Activated B cell treated with CpG ODN at 0.5 μM for 24 hours (primary cell): ENCODE measurements at regions of chr7 and their contacts with region 1.

Region 1: GRCh38 chr7:90595801-90596671 is at the start of gene CDK14:
- DNase-seq: peak; percentile 79
- ATAC-seq: peak; percentile 66
- H3K4me3 Mint-ChIP-seq: peak within 1 kb of the TSS; percentile 96
- H3K27ac Mint-ChIP-seq: peak within 1 kb of the TSS; percentile 95
- H3K4me1 Mint-ChIP-seq: peaks cover 56% of the 10 kb centered on the region
- H3K27me3 Mint-ChIP-seq: no peaks in the 10 kb centered on the region
- CTCF ChIP-seq: no peak
- total RNA-seq, gene CDK14: 130 and 140 TPM in 2 replicates

Region 2: DNA sequence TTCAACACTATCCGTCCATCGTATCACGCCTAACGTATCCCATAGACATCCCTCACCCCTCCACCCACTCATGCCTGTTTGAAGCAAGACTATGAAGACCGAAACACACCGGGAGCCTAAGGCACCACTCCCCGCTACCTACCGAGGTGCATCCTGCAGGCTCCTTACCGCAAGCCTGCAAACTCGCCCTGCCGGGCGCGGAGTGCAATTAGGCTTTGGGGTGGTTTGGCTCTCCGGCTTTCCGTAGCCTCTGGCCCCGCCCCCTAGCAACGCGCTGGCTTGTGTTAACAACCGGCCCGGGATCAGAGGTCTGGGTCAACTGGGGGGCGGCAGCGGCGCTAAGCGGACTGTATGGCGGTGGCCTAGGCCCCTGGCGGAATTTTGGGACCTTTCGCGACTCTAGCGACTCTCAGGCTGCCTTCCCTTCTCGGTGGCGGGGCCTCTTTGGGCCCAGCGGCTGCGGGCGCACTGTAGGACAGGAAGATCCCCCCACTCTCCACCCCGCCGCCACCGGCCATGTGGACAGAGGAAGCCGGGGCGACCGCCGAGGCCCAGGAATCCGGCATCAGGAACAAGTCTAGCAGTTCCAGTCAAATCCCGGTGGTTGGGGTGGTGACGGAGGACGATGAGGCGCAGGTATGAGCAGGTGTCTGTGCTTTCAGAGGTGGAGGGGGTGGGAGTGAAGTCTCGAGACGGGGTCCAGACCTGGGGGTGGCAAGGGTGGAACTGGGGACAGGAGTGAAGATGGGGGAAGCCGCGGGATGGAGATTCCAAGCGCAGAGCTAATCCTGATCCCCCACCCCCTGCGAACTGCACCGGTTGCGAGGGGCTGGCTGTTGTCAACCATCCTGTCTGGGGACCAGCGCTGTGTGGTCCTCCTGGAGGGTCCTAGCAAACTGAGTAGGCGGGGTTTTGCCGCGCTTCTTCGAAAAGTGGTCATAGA is 350.9 kb before region 1 on chr7 and contains the start of gene CFAP69:
- CTCF ChIA-PET with region 1: no interaction called
- POLR2A ChIA-PET with region 1: no interaction called
- intact Hi-C with region 1: loop called (anchors 10 kb)
- DNase-seq: peak; percentile 82
- ATAC-seq: peak; percentile 89
- H3K4me3 Mint-ChIP-seq: peak within 1 kb of the TSS; percentile 87
- H3K27ac Mint-ChIP-seq: peak within 1 kb of the TSS; percentile 3
- H3K4me1 Mint-ChIP-seq: peaks cover 29% of the 10 kb centered on the region
- H3K27me3 Mint-ChIP-seq: peaks cover 37% of the 10 kb centered on the region
- CTCF ChIP-seq: no peak
- total RNA-seq, gene CFAP69: 0.62 TPM in 1 of 2 replicates, not detected in the other

Region 3: GRCh38 chr7:90455163-90456030 is 140.6 kb before region 1 on chr7:
- CTCF ChIA-PET with region 1: interaction called, 8 read pairs
- POLR2A ChIA-PET with region 1: interaction called, 3 read pairs
- intact Hi-C with region 1: loop called (anchors 1 kb)
- DNase-seq: no peak
- ATAC-seq: peak; percentile 73
- H3K4me3 Mint-ChIP-seq: peak overlapping the region; percentile 46
- H3K27ac Mint-ChIP-seq: no peak overlapping the region
- H3K4me1 Mint-ChIP-seq: peaks cover 8% of the 10 kb centered on the region
- H3K27me3 Mint-ChIP-seq: peaks cover 6% of the 10 kb centered on the region
- CTCF ChIP-seq: peak; percentile 64

Region 4: DNA sequence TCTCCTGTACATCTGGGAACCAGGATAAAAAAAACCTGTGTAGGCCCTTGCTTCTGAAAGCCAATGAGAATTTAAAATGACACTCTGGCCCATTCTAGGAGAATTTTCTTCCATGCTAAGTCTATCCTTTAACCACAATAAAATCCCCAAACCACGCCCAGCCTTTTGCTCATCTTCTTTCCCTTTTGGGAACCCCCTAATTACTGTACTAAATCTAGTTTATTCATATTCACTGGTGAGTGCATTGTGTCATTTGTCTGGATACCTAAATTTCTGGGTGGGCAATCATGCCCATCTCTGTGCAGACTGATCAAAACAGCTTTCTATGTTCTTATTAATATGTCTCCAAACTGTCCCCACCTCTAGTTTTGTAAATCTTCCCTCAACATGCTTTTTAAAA is 11.7 kb before region 1 on chr7:
- CTCF ChIA-PET with region 1: interaction called, 4 read pairs
- POLR2A ChIA-PET with region 1: no interaction called
- intact Hi-C with region 1: loop called (anchors 2 kb)
- DNase-seq: no peak
- ATAC-seq: no peak
- H3K4me3 Mint-ChIP-seq: no peak overlapping the region
- H3K27ac Mint-ChIP-seq: no peak overlapping the region
- H3K4me1 Mint-ChIP-seq: peaks cover 10% of the 10 kb centered on the region
- H3K27me3 Mint-ChIP-seq: no peaks in the 10 kb centered on the region
- CTCF ChIP-seq: no peak

Region 5: GRCh38 chr7:90736968-90737939 is 141.2 kb after region 1 on chr7:
- CTCF ChIA-PET with region 1: no interaction called
- POLR2A ChIA-PET with region 1: no interaction called
- intact Hi-C with region 1: loop called (anchors 5 kb)
- DNase-seq: no peak
- ATAC-seq: peak; percentile 92
- H3K4me3 Mint-ChIP-seq: peak overlapping the region; percentile 59
- H3K27ac Mint-ChIP-seq: peak overlapping the region; percentile 95
- H3K4me1 Mint-ChIP-seq: peaks cover 88% of the 10 kb centered on the region
- H3K27me3 Mint-ChIP-seq: no peaks in the 10 kb centered on the region
- CTCF ChIP-seq: no peak

Region 6: GRCh38 chr7:91264046-91264923 is 668.2 kb after region 1 on chr7 and contains the start of gene FZD1:
- CTCF ChIA-PET with region 1: no interaction called
- POLR2A ChIA-PET with region 1: no interaction called
- intact Hi-C with region 1: loop called (anchors 10 kb)
- DNase-seq: peak; percentile 54
- ATAC-seq: peak; percentile 86
- H3K4me3 Mint-ChIP-seq: peak within 1 kb of the TSS; percentile 90
- H3K27ac Mint-ChIP-seq: peak within 1 kb of the TSS; percentile 65
- H3K4me1 Mint-ChIP-seq: peaks cover 21% of the 10 kb centered on the region
- H3K27me3 Mint-ChIP-seq: peaks cover 36% of the 10 kb centered on the region
- CTCF ChIP-seq: no peak
- total RNA-seq, gene FZD1: 0.42 and 0.55 TPM in 2 replicates